ENCODE measurements at regions of chr10 and their contacts with region 1.

Region 1: DNA sequence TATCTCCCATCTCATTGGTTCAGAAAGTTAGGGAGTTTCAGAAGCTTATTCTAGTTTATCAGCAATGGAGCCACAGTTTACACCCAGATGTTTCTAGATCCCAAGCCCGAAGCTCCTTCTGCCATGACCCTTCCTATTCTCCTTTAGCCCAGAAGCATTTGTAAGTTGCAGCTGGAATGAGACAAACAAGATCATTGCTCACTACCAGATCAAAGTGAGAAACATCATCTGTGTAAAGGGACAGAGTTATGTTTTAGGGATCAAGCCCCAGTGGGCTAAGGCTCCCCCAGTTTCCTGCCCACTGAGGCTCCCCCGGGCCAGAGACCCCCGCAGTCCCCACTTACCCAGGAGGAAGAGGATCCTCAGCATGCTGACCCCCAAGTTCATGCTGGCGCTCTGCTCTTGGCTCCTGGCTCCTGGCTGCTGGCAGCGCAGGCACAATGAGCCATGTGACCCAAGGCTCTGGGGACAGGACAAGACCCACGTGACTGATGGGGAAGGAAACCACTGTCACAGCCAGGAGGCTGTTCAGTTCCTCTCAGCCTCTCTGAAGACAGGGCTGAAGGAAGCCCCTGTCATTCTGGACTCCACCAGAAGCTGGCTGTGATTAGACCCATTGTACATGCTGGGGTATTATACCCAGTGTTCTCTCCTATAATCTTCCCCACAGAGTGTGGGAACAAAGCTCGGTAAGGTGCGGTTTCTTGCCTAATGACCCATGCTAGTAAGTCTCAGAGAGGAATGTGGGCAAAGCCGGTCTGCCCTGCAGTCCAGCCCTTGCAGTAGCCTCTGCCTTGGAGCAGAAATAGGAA is at the start of gene TMEM273:
- DNase-seq: peak; percentile 78
- H3K4me3 Mint-ChIP-seq: peak within 1 kb of the TSS; percentile 91
- H3K27ac Mint-ChIP-seq: peak within 1 kb of the TSS; percentile 92
- H3K4me1 Mint-ChIP-seq: peaks cover 77% of the 10 kb centered on the region
- H3K27me3 Mint-ChIP-seq: no peaks in the 10 kb centered on the region
- total RNA-seq, gene TMEM273: 98.2 to 100 TPM

Region 2: DNA sequence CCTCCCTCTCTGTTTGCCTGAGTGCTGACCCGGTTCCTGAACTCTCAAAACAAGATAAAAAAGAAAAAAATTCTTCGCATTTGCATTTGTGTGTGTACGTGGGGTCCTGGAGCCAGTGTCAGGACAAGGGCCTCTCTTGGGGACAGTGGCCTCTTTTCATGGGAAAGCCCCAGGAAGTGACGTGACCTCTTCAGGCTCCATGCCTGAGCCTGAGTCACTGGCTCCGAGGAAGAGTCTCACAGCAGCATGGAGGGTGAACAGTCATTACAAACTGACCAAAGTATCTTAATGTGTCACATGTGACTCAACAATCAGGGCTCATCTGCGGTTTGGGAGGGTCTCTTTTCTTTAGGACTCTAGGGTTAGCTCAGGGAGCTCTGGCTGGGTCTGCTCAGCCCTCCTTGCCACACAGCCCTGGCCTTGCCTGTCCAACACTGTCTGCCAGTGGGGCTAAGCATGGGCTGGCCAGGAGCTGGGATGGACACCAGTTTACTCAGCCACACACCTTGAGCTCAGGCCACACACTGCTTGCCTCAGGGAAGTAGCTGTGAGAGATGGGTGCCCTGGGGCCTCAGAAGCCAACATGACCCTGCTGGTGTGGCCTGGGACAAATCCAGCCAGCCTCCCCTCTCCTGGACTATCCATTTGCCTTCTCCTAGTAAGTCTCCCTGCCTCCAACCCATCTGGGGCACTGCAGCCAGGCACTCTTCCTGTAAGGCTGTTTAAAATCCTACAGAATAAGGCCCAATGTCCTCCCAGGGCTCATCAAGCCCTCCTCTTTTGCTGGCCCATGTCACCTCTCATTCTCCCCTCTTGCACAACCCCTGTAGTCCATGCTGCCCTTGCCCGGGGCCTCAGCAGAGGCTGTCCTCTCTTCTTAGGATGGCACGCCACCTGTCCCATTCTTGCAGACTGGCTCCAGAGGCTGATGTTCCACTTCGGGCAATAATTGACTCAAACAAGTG is 10.5 kb before region 1 on chr10:
- CTCF ChIA-PET with region 1: interaction called, 3 read pairs
- POLR2A ChIA-PET with region 1: interaction called, 48 read pairs
- DNase-seq: peak; percentile 83
- H3K4me3 Mint-ChIP-seq: peak overlapping the region; percentile 58
- H3K27ac Mint-ChIP-seq: peak overlapping the region; percentile 95
- H3K4me1 Mint-ChIP-seq: peaks cover 94% of the 10 kb centered on the region
- H3K27me3 Mint-ChIP-seq: no peaks in the 10 kb centered on the region